Right ventricle myocardium inferior (tissue), 1 donor: ENCODE measurements at regions of chr16 and their contacts with region 1.

Region 1: DNA sequence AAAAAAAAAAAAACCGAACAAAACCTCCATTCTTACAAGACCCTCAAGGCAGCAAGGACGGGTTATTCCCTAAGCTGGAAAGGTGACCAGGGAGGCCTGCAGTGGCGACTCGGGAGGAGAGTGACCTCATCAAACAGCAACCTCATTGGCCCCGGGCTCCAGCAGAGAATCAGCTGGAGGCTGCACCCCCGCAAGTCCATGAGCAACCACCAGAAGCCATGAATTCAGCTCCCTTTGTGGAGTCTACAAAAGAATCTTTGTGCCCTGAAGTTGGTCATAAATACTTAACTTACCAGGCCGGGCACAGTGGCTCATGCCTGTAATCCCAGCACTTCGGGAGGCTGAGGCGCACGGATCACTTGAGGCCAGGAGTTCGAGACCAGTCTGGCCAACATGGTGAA is 80.9 kb upstream of the CREBBP start:
- DNase-seq: no peak
- ATAC-seq: no peak

Region 2: DNA sequence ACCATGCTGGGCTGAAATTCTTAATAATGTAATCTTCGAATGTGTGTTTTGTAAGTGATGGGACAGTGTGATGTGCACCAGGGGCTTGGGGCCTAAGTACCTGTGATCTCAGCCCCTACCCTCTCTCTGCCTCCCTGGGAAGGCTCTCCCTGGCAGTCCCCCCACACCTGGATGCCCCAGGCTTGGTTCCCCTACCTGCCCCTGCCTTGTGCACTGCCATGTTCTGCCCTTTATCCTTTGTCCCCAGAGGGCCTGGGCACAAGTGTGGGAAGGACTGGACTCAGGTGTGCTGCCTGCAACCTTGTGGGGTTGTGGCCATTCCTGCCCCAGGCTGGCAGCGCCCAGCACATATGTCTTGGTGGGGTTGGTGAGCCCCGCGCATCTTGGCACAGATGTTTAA is 25.5 kb before region 1 on chr16:
- intact Hi-C with region 1: loop called (anchors 1 kb)
- DNase-seq: no peak
- ATAC-seq: no peak